Psoas muscle (tissue), 8 donors: ENCODE measurements at regions of chr2 and their contacts with region 1.

Region 1: GRCh38 chr2:171893824-171894611 is at the start of gene SLC25A12:
- DNase-seq: peak; percentile 87 to 92
- ATAC-seq: peak; percentile 95 to 97 (median 96)
- H3K4me3 ChIP-seq: peak within 1 kb of the TSS; percentile 87
- H3K27ac ChIP-seq: peak within 1 kb of the TSS; percentile 90
- H3K4me1 ChIP-seq: peaks cover 15% of the 10 kb centered on the region
- H3K27me3 ChIP-seq: no peaks in the 10 kb centered on the region
- CTCF ChIP-seq: no peak
- total RNA-seq, gene SLC25A12: 59.9 to 83.6 (median 70.3) TPM

Region 2: GRCh38 chr2:171922230-171923022 is 28.4 kb after region 1 on chr2 and contains the start of gene HAT1:
- intact Hi-C with region 1: loop called in 1 of 2 experiments (anchors 2 kb)
- DNase-seq: peak; percentile 97 to 98
- ATAC-seq: peak; percentile 99
- H3K4me3 ChIP-seq: peak within 1 kb of the TSS; percentile 95
- H3K27ac ChIP-seq: peak within 1 kb of the TSS; percentile 97
- H3K4me1 ChIP-seq: peaks cover 26% of the 10 kb centered on the region
- H3K27me3 ChIP-seq: no peaks in the 10 kb centered on the region
- CTCF ChIP-seq: no peak
- total RNA-seq, gene HAT1: 31.8 to 66.5 (median 44.5) TPM

Region 3: DNA sequence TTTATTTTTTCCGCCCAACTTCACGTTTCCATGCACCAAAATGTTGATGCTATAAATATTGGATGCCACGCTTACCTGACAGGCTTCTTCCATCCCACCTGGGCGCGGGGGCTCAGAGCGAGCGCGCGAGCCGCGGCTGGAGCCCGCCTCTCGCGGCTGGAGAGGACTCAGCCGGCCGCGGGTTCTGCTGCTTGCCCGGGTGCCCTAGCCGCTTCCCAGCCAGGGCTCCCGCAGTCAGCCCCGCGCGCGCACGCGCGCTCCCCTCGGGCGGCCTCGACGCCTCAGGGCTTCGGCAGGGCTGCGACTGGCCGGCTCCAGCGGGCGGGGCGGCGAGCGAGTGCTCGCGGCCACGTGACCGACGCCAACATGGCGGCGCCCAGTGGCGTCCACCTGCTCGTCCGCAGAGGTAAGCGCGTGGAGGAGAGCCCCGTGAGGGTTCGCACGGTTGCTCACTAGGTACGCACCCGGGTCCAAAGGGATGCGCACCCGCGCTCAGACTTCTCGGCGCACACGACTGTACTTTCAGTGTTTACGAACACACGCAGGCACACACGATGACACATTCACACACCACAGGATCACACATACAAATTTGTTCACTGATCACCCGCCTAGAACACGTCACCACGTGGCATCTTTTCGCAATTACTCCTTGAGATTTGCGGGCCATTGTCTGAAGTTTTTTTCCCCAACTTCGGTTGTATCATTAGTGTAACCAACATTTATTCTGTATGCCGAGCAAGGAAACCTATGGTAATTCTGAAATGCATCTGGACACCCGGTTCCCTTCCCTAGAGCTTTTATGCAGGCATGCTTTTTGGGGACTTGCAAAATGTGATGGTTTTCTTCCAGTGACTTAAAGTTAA is 105.8 kb after region 1 on chr2 and contains the start of gene METAP1D:
- intact Hi-C with region 1: loop called in 1 of 2 experiments (anchors 5 kb)
- DNase-seq: peak; percentile 93 to 95
- ATAC-seq: peak; percentile 99 to 100 (median 100)
- H3K4me3 ChIP-seq: peak within 1 kb of the TSS; percentile 88
- H3K27ac ChIP-seq: peak within 1 kb of the TSS; percentile 91
- H3K4me1 ChIP-seq: peaks cover 12% of the 10 kb centered on the region
- H3K27me3 ChIP-seq: no peaks in the 10 kb centered on the region
- CTCF ChIP-seq: no peak
- total RNA-seq, gene METAP1D: 8.0 to 10.1 (median 10.0) TPM